ENCODE measurements at regions of chr22 and their contacts with region 1.

Region 1: DNA sequence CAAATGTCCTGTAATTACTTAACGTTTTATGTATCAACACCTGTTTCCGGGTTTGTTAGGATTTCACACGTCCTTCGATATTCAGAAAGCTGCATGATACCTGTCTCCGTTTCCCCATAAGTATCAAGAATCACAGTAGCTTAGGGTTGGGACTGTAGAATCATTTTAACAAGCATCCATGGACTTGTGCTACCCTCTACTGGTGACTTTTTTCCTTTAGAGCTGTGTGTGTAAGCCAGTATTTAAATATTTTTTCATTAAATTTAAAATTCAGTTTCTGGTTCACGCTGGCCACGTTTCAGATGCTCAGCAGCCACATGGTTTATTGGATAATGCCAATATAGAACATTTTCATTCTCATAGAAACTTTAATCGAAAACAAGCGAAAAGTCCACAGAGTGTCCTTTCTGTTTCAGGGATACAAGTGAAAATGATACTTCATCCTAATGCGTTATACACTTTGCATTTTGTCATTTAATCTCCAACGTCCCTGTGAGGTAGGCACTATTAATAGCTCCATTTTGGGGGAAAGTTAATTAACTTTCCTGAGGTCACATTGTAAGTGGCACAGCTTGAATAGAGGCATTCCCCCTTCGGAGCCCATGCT is 61.5 kb upstream of the SLC25A18 start:
- DNase-seq: no peak
- ATAC-seq: peak; percentile 87

Region 2: GRCh38 chr22:17074648-17075002 is 427.2 kb before region 1 on chr22:
- intact Hi-C with region 1: loop called (anchors 5 kb)
- DNase-seq: no peak
- ATAC-seq: no peak

Region 3: GRCh38 chr22:17552737-17553136 is 51.0 kb after region 1 on chr22:
- intact Hi-C with region 1: no loop called
- DNase-seq: peak; percentile 58
- ATAC-seq: peak; percentile 81